Activated CD4-positive, alpha-beta T cell treated with anti-CD3 and anti-CD28 coated beads for 36 hours (primary cell): ENCODE measurements at regions of chr1 and their contacts with region 1.

Region 1: GRCh38 chr1:67214420-67215174 is 48.3 kb downstream of the IL23R start:
- DNase-seq: peak; percentile 75
- ATAC-seq: peak; percentile 48
- H3K4me3 Mint-ChIP-seq: no peak overlapping the region
- H3K27ac Mint-ChIP-seq: peak overlapping the region; percentile 19
- H3K4me1 Mint-ChIP-seq: peaks cover 46% of the 10 kb centered on the region
- H3K27me3 Mint-ChIP-seq: no peaks in the 10 kb centered on the region

Region 2: DNA sequence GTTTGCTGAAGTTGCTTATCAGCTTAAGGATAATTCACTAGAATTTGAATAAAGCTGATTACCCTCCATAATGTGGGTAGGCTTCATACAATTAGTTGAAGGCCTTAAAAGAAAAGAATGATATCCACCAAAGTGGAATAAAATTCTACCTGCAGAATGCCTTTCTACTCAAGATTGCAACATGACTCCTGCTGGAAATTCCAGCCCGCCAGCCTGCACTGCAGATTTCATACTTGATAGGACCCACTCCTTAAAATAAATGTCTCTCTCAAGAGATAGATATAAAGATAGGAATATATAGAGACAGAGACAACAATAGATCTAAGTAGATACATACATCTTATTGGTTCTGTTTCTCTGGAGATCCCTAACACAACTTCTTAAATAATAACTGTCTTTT is 389.8 kb before region 1 on chr1:
- CTCF ChIA-PET with region 1: no interaction called
- POLR2A ChIA-PET with region 1: no interaction called
- intact Hi-C with region 1: no loop called
- DNase-seq: no peak
- ATAC-seq: no peak
- H3K4me3 Mint-ChIP-seq: no peak overlapping the region
- H3K27ac Mint-ChIP-seq: no peak overlapping the region
- H3K4me1 Mint-ChIP-seq: no peaks in the 10 kb centered on the region
- H3K27me3 Mint-ChIP-seq: no peaks in the 10 kb centered on the region

Region 3: GRCh38 chr1:66996018-66996682 is 218.4 kb before region 1 on chr1:
- CTCF ChIA-PET with region 1: interaction called, 44 read pairs
- POLR2A ChIA-PET with region 1: no interaction called
- intact Hi-C with region 1: loop called (anchors 1 kb)
- DNase-seq: peak; percentile 79
- ATAC-seq: peak; percentile 79
- H3K4me3 Mint-ChIP-seq: no peak overlapping the region
- H3K27ac Mint-ChIP-seq: peak overlapping the region; percentile 53
- H3K4me1 Mint-ChIP-seq: peaks cover 16% of the 10 kb centered on the region
- H3K27me3 Mint-ChIP-seq: no peaks in the 10 kb centered on the region

Region 4: GRCh38 chr1:67040410-67040809 is 174.2 kb before region 1 on chr1:
- CTCF ChIA-PET with region 1: no interaction called
- POLR2A ChIA-PET with region 1: no interaction called
- intact Hi-C with region 1: no loop called
- DNase-seq: no peak
- ATAC-seq: no peak
- H3K4me3 Mint-ChIP-seq: no peak overlapping the region
- H3K27ac Mint-ChIP-seq: no peak overlapping the region
- H3K4me1 Mint-ChIP-seq: peaks cover 9% of the 10 kb centered on the region
- H3K27me3 Mint-ChIP-seq: no peaks in the 10 kb centered on the region

Region 5: DNA sequence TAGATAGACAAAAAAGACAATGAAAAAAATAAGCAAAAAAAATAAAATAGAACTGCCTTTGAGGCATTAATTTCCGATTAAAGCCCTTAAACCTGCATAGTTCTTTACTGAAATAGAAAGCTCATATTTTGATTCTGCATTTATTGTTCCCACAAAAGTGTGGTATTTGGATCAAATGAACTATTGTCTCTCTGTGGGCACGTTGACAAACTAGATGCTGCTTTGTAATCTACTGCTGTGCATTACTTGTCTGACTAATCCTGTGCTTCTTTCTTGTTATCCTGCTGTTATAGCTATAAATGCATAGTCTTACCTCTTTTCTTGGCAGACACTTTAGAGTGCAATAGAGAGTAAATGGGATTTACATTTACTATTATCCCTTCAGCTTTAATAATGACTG is 129.3 kb before region 1 on chr1:
- CTCF ChIA-PET with region 1: no interaction called
- POLR2A ChIA-PET with region 1: no interaction called
- intact Hi-C with region 1: no loop called
- DNase-seq: no peak
- ATAC-seq: no peak
- H3K4me3 Mint-ChIP-seq: no peak overlapping the region
- H3K27ac Mint-ChIP-seq: no peak overlapping the region
- H3K4me1 Mint-ChIP-seq: no peaks in the 10 kb centered on the region
- H3K27me3 Mint-ChIP-seq: no peaks in the 10 kb centered on the region

Region 6: DNA sequence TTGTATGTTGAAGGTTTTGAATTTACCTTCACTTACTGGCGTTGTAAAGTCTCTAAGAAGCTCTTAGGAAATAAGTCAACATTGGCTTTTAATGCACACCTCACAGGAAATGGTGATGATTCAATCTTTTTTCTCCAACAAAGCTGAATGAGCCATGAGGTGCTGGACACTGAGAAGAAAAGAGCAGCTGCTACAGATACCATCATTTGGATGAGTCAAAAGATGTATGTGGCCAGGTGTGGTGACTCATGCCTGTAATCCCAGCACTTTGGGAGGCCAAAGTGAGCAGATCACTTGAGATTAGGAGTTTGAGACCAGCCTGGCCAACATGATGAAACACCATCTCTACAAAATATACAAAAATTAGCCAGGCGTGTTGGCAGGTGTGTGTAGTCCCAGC is 51.6 kb before region 1 on chr1:
- CTCF ChIA-PET with region 1: interaction called, 55 read pairs
- POLR2A ChIA-PET with region 1: interaction called, 6 read pairs
- intact Hi-C with region 1: no loop called
- DNase-seq: peak; percentile 71
- ATAC-seq: peak; percentile 73
- H3K4me3 Mint-ChIP-seq: peak overlapping the region; percentile 59
- H3K27ac Mint-ChIP-seq: peak overlapping the region; percentile 90
- H3K4me1 Mint-ChIP-seq: peaks cover 66% of the 10 kb centered on the region
- H3K27me3 Mint-ChIP-seq: peaks cover 1% of the 10 kb centered on the region

Region 7: GRCh38 chr1:67201891-67202290 is 12.7 kb before region 1 on chr1:
- CTCF ChIA-PET with region 1: interaction called, 37 read pairs
- POLR2A ChIA-PET with region 1: no interaction called
- intact Hi-C with region 1: no loop called
- DNase-seq: no peak
- ATAC-seq: no peak
- H3K4me3 Mint-ChIP-seq: no peak overlapping the region
- H3K27ac Mint-ChIP-seq: no peak overlapping the region
- H3K4me1 Mint-ChIP-seq: peaks cover 2% of the 10 kb centered on the region
- H3K27me3 Mint-ChIP-seq: no peaks in the 10 kb centered on the region

Region 8: DNA sequence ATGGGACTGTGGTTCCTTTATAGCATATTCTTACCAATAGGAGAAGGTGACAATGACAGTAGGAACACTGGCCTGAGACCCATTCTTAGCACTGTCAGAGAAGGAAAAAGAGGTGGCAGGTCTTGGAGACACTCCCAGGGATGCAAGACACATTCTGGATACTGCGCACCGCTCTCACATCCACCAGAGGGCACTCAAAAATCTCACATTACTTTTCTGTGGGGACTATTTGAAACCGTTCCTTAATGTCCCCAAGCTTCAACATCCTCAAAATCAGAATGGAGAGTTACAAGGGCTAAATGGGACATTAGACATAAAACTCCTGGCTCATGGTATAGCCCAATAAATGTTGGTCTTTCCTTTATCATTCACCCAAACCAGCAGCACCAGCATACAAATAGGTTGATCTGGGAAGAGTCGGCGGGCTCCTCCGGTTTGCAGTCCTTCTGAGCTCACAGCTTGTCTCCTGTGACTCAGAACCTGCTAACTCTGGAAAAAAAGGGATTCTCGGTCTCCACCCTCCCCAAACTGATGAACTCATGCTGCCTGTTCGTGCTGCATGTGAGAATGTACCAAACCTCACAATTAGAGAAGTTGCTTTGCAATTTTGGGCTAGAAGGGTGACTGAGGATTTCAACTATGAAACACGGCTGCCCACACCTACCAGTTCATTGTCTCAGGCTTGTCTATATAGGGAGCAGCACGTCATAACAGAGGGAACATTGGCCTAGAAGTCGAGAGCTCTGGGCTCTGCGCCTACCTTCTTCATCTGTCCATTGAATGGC is 133.3 kb after region 1 on chr1:
- CTCF ChIA-PET with region 1: interaction called, 16 read pairs
- POLR2A ChIA-PET with region 1: no interaction called
- intact Hi-C with region 1: no loop called
- DNase-seq: peak; percentile 42
- ATAC-seq: no peak
- H3K4me3 Mint-ChIP-seq: no peak overlapping the region
- H3K27ac Mint-ChIP-seq: no peak overlapping the region
- H3K4me1 Mint-ChIP-seq: peaks cover 38% of the 10 kb centered on the region
- H3K27me3 Mint-ChIP-seq: no peaks in the 10 kb centered on the region